CD8-positive, alpha-beta T cell (primary cell): ENCODE measurements at regions of chr4 and their contacts with region 1.

Region 1: DNA sequence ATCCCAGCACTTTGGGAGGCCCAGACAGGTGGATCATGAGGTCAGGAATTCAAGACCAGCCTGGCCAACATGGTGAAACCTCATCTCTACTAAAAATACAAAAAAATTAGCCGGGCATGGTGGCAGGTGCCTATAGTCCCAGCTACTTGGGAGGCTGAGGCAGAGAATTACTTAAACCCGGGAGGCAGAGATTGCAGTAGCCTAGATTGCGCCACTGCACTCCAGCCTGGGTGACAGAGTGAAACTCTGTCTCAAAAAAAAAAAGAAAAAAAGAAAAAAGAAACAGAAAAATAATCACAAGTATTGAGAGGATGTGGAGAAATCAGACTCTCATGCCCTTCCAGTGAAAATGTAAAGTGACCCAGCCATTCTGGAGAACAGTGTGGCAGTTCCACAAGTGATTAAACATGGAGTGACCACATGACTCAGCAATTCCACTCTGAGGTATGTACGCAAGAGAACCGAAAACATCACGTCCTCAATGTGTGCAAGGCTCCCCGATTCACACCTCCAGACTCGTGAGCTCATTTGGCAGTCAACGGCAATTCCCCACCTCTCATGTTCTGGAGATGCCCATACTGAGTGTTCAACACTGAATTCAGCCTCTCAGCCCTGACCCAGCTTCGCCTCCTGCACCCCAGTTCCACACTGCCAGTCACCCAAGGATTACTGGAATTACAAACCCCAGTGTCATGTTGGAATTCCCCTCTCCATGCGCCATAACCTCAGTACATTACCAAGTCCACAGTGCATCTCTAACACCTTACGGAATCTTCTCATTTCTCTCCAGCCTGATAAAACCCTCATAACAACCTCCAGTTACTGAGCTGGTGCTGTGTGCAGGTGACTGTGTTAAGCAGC is 21.1 kb downstream of the ACOX3 start:
- DNase-seq: peak in 2 of 9 experiments; percentile 56 to 74
- ATAC-seq: peak; percentile 57
- H3K4me3 ChIP-seq: no peak overlapping the region
- H3K4me3 Mint-ChIP-seq: no peak overlapping the region
- H3K27ac ChIP-seq: no peak overlapping the region
- H3K27ac Mint-ChIP-seq: peak overlapping the region; percentile 32
- H3K4me1 ChIP-seq: no peaks in the 10 kb centered on the region
- H3K4me1 Mint-ChIP-seq: peaks cover 17% of the 10 kb centered on the region
- H3K27me3 ChIP-seq: no peaks in the 10 kb centered on the region
- H3K27me3 Mint-ChIP-seq: no peaks in the 10 kb centered on the region
- CTCF ChIP-seq: no peak

Region 2: DNA sequence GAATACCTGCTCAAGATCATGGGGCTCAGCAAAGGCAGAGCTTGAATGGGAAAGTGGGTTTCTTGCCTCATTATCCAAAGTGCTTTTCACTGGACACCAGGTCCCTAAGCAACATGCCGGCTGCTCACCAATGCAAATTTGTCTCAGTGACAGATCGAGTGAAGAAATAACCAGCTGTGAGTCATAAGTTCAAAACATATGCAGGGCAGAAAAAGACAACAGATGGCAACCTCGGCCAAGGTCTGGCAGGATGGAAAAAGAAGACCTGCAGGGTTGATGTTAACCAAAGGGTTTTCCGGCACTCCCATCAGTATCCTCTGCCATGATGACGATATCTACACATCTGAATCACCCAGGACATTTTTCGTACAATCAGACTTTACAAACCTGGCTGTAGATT is 603.8 kb before region 1 on chr4:
- CTCF ChIA-PET with region 1: no interaction called
- POLR2A ChIA-PET with region 1: no interaction called
- intact Hi-C with region 1: no loop called
- DNase-seq: no peak
- ATAC-seq: no peak
- H3K4me3 ChIP-seq: no peak overlapping the region
- H3K4me3 Mint-ChIP-seq: no peak overlapping the region
- H3K27ac ChIP-seq: no peak overlapping the region
- H3K27ac Mint-ChIP-seq: no peak overlapping the region
- H3K4me1 ChIP-seq: no peaks in the 10 kb centered on the region
- H3K4me1 Mint-ChIP-seq: no peaks in the 10 kb centered on the region
- H3K27me3 ChIP-seq: no peaks in the 10 kb centered on the region
- H3K27me3 Mint-ChIP-seq: no peaks in the 10 kb centered on the region
- CTCF ChIP-seq: no peak

Region 3: DNA sequence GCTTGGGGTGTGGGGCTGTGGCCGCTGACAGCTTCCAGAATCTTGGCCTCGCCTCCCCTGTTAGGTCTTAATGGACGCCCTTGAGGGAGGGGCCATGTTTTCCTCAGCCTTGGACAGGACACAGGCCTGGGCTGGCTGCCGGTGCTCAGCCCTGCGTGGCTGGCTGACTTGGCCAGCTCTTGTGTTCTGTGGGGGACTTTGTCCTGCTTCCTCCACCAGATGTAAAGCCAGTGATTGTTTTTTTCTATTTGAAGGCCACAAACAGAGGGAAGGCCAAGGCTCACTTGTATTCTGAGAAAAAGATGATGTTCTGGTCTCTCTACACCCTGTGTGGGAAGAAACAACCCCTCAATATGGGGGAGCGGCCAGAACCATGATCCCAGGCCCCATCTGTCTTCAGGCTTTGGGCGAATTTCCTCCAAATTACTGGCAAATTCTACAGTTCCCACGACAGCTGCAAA is 78.6 kb before region 1 on chr4:
- CTCF ChIA-PET with region 1: no interaction called
- POLR2A ChIA-PET with region 1: no interaction called
- intact Hi-C with region 1: no loop called
- DNase-seq: no peak
- ATAC-seq: no peak
- H3K4me3 ChIP-seq: no peak overlapping the region
- H3K4me3 Mint-ChIP-seq: no peak overlapping the region
- H3K27ac ChIP-seq: no peak overlapping the region
- H3K27ac Mint-ChIP-seq: no peak overlapping the region
- H3K4me1 ChIP-seq: no peaks in the 10 kb centered on the region
- H3K4me1 Mint-ChIP-seq: no peaks in the 10 kb centered on the region
- H3K27me3 ChIP-seq: no peaks in the 10 kb centered on the region
- H3K27me3 Mint-ChIP-seq: no peaks in the 10 kb centered on the region
- CTCF ChIP-seq: no peak

Region 4: DNA sequence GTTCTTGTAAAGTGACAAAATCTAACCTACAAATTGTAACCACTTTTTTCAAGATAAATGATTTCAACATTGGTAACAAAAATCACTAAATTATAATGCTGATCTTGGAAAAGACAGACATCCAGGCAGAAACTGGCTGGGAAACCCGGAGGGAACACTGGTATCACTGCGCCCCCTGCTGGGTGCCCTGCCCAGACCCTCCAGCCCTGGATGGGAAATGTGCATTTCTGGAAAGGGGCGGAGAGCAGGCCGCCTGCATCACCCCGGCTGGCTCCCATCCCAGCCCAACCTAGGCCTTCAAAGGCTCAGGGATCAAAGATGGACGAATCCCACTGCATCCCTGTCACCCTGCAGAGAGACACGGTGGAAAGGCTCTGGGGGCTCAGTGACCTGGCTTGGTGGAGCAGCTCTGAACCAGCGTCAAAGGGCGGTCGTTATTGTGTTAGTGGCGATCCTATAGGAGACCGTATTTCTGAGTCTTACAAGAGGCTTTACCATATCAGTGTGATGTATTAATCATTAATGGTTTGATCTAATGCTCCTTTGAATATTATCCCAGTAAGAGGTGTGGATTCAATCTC is 16.1 kb before region 1 on chr4:
- CTCF ChIA-PET with region 1: interaction called, 11 read pairs
- POLR2A ChIA-PET with region 1: no interaction called
- intact Hi-C with region 1: no loop called
- DNase-seq: peak in 8 of 9 experiments; percentile 19 to 61 (median 56)
- ATAC-seq: peak; percentile 51
- H3K4me3 ChIP-seq: no peak overlapping the region
- H3K4me3 Mint-ChIP-seq: no peak overlapping the region
- H3K27ac ChIP-seq: no peak overlapping the region
- H3K27ac Mint-ChIP-seq: no peak overlapping the region
- H3K4me1 ChIP-seq: no peaks in the 10 kb centered on the region
- H3K4me1 Mint-ChIP-seq: no peaks in the 10 kb centered on the region
- H3K27me3 ChIP-seq: no peaks in the 10 kb centered on the region
- H3K27me3 Mint-ChIP-seq: no peaks in the 10 kb centered on the region
- CTCF ChIP-seq: peak; percentile 83